Panc1 (cell line): ENCODE measurements at regions of chr6 and their contacts with region 1.

Region 1: GRCh38 chr6:142692942-142693341 is 252.0 kb downstream of the HIVEP2 start:
- DNase-seq: peak; percentile 38
- ATAC-seq: peak; percentile 85
- H3K4me3 ChIP-seq: no peak overlapping the region
- H3K27ac ChIP-seq: no peak overlapping the region
- H3K4me1 ChIP-seq: no peaks in the 10 kb centered on the region
- H3K27me3 ChIP-seq: no peaks in the 10 kb centered on the region
- CTCF ChIP-seq: peak; percentile 91

Region 2: DNA sequence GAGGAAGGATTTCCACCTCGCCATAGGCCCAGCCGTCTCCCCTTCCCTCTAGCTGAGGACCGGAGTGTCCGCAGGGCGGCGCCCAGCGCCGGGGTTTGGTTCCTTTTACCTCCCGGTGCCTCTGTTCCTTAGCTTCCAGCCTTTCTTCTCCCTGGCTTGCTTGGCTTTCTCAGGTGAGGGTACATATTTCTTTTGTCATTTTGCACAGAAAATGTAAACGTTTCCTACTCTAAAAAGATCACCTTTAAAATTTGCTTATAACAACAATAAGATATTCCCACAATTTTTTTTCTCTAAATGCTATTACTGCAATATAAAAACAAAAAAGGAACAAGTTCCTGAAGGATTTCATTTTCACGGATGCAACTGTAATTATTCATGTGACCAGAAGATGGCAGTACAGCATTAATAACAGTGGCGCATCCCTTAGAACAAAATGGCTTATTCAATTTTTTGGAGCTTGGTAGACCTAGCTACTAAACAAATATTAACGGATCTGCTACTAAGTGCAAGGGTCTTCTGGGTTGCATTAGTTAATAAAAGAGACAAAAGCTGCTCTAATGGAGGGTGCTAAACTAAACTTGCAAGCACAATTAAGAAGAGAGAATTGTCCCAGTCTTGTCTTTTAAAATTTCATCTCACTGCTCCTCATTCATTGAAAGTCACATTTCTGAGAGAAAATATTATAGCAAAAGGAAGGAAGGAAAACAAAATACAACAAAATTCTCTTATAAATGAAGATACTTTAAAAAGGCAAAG is 218.2 kb before region 1 on chr6:
- CTCF ChIA-PET with region 1: interaction called, 3 read pairs
- POLR2A ChIA-PET with region 1: no interaction called
- in situ Hi-C with region 1: no loop called
- intact Hi-C with region 1: loop called (anchors 10 kb)
- DNase-seq: peak; percentile 54
- ATAC-seq: peak; percentile 97
- H3K4me3 ChIP-seq: no peak overlapping the region
- H3K27ac ChIP-seq: no peak overlapping the region
- H3K4me1 ChIP-seq: peaks cover 3% of the 10 kb centered on the region; the same call in 1 of the 2 replicates
- H3K27me3 ChIP-seq: no peaks in the 10 kb centered on the region
- CTCF ChIP-seq: peak; percentile 82

Region 3: DNA sequence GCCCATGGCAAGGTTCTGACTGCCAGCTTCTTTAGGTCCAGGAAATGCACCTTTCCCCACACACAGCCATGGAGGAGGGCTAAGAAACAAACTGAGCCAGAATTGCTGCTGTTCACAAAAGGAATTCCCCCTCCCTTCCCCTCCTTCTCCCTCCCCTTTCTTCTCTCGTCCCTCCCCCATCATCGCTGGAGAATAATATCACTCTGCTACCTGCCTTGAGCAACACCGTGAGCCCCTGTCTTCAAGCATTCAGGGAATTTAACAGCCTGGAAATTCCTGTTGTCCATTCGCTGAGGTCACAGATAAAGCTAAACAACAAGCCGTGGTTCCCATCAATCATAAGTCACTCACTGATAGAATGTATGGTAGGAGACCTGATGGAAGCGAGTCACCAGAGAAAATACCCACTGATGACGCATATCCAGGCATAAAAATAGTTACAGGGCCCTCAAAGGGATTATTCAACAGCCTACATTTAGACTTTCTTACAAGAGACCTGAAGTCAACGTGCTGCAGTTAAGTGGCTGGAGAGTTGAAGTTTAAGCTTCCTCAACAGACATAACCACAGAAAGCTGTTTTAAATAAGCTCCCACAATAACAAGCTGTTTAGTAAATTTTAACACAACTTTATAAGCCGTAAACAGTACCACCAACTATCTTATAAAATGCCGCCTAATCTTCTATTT is 192.4 kb after region 1 on chr6:
- CTCF ChIA-PET with region 1: no interaction called
- POLR2A ChIA-PET with region 1: no interaction called
- in situ Hi-C with region 1: no loop called
- intact Hi-C with region 1: loop called (anchors 5 kb)
- DNase-seq: peak; percentile 92
- ATAC-seq: peak; percentile 95
- H3K4me3 ChIP-seq: peak overlapping the region; percentile 38 to 58
- H3K27ac ChIP-seq: peak overlapping the region; percentile 80
- H3K4me1 ChIP-seq: peaks cover 22% of the 10 kb centered on the region
- H3K27me3 ChIP-seq: no peaks in the 10 kb centered on the region
- CTCF ChIP-seq: no peak

Region 4: GRCh38 chr6:142944124-142945066 is 251.5 kb after region 1 on chr6:
- CTCF ChIA-PET with region 1: no interaction called
- POLR2A ChIA-PET with region 1: no interaction called
- in situ Hi-C with region 1: no loop called
- intact Hi-C with region 1: loop called (anchors 5 kb)
- DNase-seq: no peak
- ATAC-seq: peak; percentile 37
- H3K4me3 ChIP-seq: peak overlapping the region; percentile 75 to 86
- H3K27ac ChIP-seq: peak overlapping the region; percentile 82
- H3K4me1 ChIP-seq: peaks cover 27% of the 10 kb centered on the region
- H3K27me3 ChIP-seq: no peaks in the 10 kb centered on the region
- CTCF ChIP-seq: no peak

Region 5: GRCh38 chr6:142960098-142960497 is 267.2 kb after region 1 on chr6:
- CTCF ChIA-PET with region 1: no interaction called
- POLR2A ChIA-PET with region 1: no interaction called
- in situ Hi-C with region 1: no loop called
- intact Hi-C with region 1: no loop called
- DNase-seq: no peak
- ATAC-seq: no peak
- H3K4me3 ChIP-seq: no peak overlapping the region
- H3K27ac ChIP-seq: no peak overlapping the region
- H3K4me1 ChIP-seq: no peaks in the 10 kb centered on the region
- H3K27me3 ChIP-seq: no peaks in the 10 kb centered on the region
- CTCF ChIP-seq: no peak

Region 6: GRCh38 chr6:143026696-143027449 is 333.9 kb after region 1 on chr6:
- CTCF ChIA-PET with region 1: no interaction called
- POLR2A ChIA-PET with region 1: no interaction called
- in situ Hi-C with region 1: no loop called
- intact Hi-C with region 1: loop called (anchors 2 kb)
- DNase-seq: no peak
- ATAC-seq: no peak
- H3K4me3 ChIP-seq: no peak overlapping the region
- H3K27ac ChIP-seq: no peak overlapping the region
- H3K4me1 ChIP-seq: no peaks in the 10 kb centered on the region
- H3K27me3 ChIP-seq: no peaks in the 10 kb centered on the region
- CTCF ChIP-seq: peak; percentile 73

Region 7: DNA sequence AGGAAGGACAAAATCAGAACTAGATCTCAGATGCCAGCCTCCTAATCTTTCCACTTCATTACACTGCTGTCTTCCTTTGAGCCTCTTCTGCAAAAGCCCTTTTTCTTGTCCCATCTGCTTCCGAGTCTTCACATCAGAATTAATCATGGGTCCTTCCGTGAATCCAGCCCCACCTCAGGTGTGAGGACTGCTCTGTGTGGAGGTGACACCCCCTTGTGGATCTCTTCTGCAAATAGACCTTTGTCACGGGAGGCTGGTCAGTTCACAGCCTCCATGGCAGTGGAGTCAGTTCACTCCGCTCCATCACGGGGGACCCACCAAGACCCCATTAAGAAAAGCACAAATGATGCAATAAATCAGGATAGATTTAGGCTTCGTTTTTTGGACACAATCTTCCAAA is 586.4 kb after region 1 on chr6:
- CTCF ChIA-PET with region 1: no interaction called
- POLR2A ChIA-PET with region 1: no interaction called
- in situ Hi-C with region 1: no loop called
- intact Hi-C with region 1: loop called (anchors 2 kb)
- DNase-seq: peak; percentile 5
- ATAC-seq: peak; percentile 88
- H3K4me3 ChIP-seq: no peak overlapping the region
- H3K27ac ChIP-seq: no peak overlapping the region
- H3K4me1 ChIP-seq: no peaks in the 10 kb centered on the region
- H3K27me3 ChIP-seq: peaks cover 3% of the 10 kb centered on the region; the same call in 1 of the 2 replicates
- CTCF ChIP-seq: peak; percentile 74

Region 8: GRCh38 chr6:143427109-143427817 is 734.3 kb after region 1 on chr6:
- CTCF ChIA-PET with region 1: no interaction called
- POLR2A ChIA-PET with region 1: no interaction called
- in situ Hi-C with region 1: no loop called
- intact Hi-C with region 1: loop called (anchors 2 kb)
- DNase-seq: peak; percentile 32
- ATAC-seq: peak; percentile 100
- H3K4me3 ChIP-seq: no peak overlapping the region
- H3K27ac ChIP-seq: no peak overlapping the region
- H3K4me1 ChIP-seq: no peaks in the 10 kb centered on the region
- H3K27me3 ChIP-seq: no peaks in the 10 kb centered on the region
- CTCF ChIP-seq: peak; percentile 92